ENCODE measurements at regions of chr10 and their contacts with region 1.

Region 1: GRCh38 chr10:84429926-84430520 is 101.6 kb downstream of the CCSER2 start:
- DNase-seq: peak; percentile 82
- ATAC-seq: peak; percentile 90
- H3K4me3 Mint-ChIP-seq: no peak overlapping the region
- H3K27ac Mint-ChIP-seq: no peak overlapping the region
- H3K4me1 Mint-ChIP-seq: peaks cover 31% of the 10 kb centered on the region
- H3K27me3 Mint-ChIP-seq: no peaks in the 10 kb centered on the region

Region 2: GRCh38 chr10:84375011-84375410 is 55.0 kb before region 1 on chr10:
- CTCF ChIA-PET with region 1: interaction called, 4 read pairs
- POLR2A ChIA-PET with region 1: no interaction called
- intact Hi-C with region 1: loop called (anchors 2 to 5 kb)
- DNase-seq: peak; percentile 53
- ATAC-seq: peak; percentile 72
- H3K4me3 Mint-ChIP-seq: no peak overlapping the region
- H3K27ac Mint-ChIP-seq: no peak overlapping the region
- H3K4me1 Mint-ChIP-seq: peaks cover 41% of the 10 kb centered on the region
- H3K27me3 Mint-ChIP-seq: no peaks in the 10 kb centered on the region

Region 3: DNA sequence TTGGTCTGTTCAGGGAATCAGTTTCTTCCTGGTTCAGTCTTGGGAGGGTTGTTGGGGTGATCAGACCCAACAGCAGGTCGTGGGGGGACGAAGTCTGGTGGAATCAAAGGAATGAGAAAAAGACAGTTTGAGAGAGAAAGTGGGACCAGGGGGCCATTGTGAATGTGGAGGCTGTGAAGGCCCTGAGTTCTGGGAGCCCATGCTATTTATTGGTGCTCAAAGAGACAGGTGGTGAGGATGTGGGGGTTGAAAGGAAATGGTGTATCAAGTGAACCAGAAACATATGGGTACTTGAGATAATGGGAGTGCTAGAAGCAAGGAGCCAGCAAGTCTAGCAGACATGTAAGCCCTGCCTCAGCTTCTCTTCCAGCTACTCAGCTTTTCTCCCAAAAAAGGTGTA is 17.5 kb before region 1 on chr10:
- CTCF ChIA-PET with region 1: interaction called, 16 read pairs
- POLR2A ChIA-PET with region 1: no interaction called
- intact Hi-C with region 1: no loop called
- DNase-seq: no peak
- ATAC-seq: no peak
- H3K4me3 Mint-ChIP-seq: no peak overlapping the region
- H3K27ac Mint-ChIP-seq: no peak overlapping the region
- H3K4me1 Mint-ChIP-seq: peaks cover 16% of the 10 kb centered on the region
- H3K27me3 Mint-ChIP-seq: no peaks in the 10 kb centered on the region

Region 4: DNA sequence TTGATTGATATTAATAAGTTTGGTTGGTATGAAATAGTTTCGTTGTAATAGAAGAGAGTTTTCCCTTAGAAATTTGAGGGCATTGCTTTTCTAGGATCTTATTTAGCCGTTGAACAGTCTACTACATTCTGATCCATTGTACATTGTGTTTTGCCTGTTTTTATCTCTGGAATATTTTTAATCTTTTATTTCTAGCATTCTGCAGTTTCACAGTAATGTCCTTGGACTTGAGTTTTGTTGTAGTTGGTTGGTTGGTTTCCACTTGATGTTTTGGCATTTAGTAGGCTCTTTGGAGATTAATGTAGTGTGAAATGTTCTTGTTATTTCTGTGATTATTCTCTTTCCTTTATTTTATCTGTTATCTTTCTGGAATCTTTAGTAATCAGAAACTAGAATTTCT is 10.8 kb after region 1 on chr10:
- CTCF ChIA-PET with region 1: interaction called, 30 read pairs
- POLR2A ChIA-PET with region 1: no interaction called
- intact Hi-C with region 1: no loop called
- DNase-seq: no peak
- ATAC-seq: no peak
- H3K4me3 Mint-ChIP-seq: no peak overlapping the region
- H3K27ac Mint-ChIP-seq: no peak overlapping the region
- H3K4me1 Mint-ChIP-seq: peaks cover 3% of the 10 kb centered on the region
- H3K27me3 Mint-ChIP-seq: no peaks in the 10 kb centered on the region

Region 5: DNA sequence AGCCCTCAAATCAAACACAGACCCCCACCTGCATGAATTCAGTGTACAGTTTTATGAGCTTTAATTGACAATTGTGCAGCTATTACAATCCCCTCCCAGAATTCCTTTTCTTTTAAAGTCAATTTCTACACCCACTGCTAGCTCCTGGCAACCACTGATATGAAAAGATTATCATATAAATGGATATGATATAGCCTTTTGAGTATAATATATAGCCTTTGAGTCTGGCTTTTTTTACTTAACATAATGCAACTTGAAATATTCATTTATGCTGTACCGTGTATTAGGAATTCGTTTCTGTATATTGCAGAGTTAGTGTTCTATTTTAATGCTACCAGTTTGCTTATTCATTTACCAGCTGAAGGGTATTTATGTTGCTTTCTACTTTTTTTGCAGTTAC is 26.1 kb after region 1 on chr10:
- CTCF ChIA-PET with region 1: interaction called, 10 read pairs
- POLR2A ChIA-PET with region 1: no interaction called
- intact Hi-C with region 1: no loop called
- DNase-seq: no peak
- ATAC-seq: no peak
- H3K4me3 Mint-ChIP-seq: no peak overlapping the region
- H3K27ac Mint-ChIP-seq: no peak overlapping the region
- H3K4me1 Mint-ChIP-seq: peaks cover 4% of the 10 kb centered on the region
- H3K27me3 Mint-ChIP-seq: no peaks in the 10 kb centered on the region

Measured in activated CD4-positive, alpha-beta T cell treated with anti-CD3 and anti-CD28 coated beads for 36 hours (primary cell).